Gastrocnemius medialis (tissue), 4 donors: ENCODE measurements at regions of chr12 and their contacts with region 1.

Region 1: GRCh38 chr12:27424631-27425230 is 21.8 kb upstream of the SMCO2 start:
- DNase-seq: no peak
- ATAC-seq: peak; percentile 50 to 79
- H3K4me3 ChIP-seq: no peak overlapping the region
- H3K27ac ChIP-seq: no peak overlapping the region
- H3K4me1 ChIP-seq: no peaks in the 10 kb centered on the region
- H3K27me3 ChIP-seq: no peaks in the 10 kb centered on the region
- CTCF ChIP-seq: peak in 4 of 5 experiments; percentile 23 to 58 (median 38)
- POLR2A ChIP-seq: no peak

Region 2: DNA sequence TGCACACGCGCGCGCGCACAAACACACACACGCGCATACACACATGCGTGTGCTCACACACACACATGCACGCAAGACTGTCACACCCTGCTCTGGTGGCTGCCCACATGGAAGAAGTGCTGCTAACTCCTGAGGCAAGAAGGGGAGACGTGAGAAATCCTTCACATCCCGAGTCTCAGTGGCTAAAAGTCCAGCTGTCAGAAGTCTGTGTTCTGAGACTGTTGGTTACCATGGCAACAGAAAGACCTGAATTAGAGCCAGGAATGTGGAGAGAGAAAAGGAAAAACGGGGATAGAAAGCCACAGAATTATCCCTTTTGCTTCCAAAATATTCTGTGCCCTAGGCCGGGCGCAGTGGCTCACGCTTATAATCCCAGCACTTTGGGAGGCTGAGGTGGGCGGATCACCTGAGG is 170.5 kb after region 1 on chr12:
- in situ Hi-C with region 1: no loop called
- intact Hi-C with region 1: no loop called
- DNase-seq: peak; percentile 17 to 25
- ATAC-seq: peak; percentile 78 to 79
- H3K4me3 ChIP-seq: no peak overlapping the region
- H3K27ac ChIP-seq: peak overlapping the region in 2 of 4 donors; percentile 2 to 46
- H3K4me1 ChIP-seq: peaks cover 13 to 17% of the 10 kb centered on the region in 2 donors
- H3K27me3 ChIP-seq: no peaks in the 10 kb centered on the region
- CTCF ChIP-seq: no peak
- POLR2A ChIP-seq: no peak

Region 3: DNA sequence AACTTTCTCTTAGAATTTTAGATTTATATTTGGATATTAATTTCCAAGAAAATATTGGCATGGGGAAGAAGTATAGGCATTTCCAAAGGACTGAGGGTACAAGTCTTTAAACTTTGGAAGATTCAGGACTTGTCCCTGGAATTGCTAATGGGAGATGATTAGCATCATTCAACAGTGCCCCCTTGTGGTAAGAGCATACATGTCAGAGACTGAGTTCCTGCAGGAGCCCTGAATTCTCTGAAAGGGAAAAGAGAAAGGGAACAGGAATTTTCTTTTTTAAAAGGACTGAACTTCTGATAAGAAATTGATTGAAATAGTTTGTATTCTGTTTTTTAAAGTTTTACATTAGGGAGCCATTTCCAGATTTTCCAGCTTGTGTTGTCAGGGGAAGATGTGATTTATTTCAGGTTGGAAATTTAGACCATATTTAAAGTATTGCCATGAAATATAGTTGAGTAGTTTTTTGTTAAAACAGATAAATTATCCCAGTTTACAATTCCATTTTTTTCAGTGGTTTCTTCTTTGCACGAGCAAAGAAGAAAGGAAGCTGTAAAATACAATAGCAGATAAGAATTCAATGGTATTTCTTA is 227.5 kb after region 1 on chr12:
- in situ Hi-C with region 1: loop called in 1 of 4 experiments (anchors 5 kb)
- intact Hi-C with region 1: no loop called
- DNase-seq: peak in 1 of 2 donors; percentile 41
- ATAC-seq: peak; percentile 75 to 92
- H3K4me3 ChIP-seq: no peak overlapping the region
- H3K27ac ChIP-seq: no peak overlapping the region
- H3K4me1 ChIP-seq: no peaks in the 10 kb centered on the region
- H3K27me3 ChIP-seq: no peaks in the 10 kb centered on the region
- CTCF ChIP-seq: peak; percentile 69 to 89 (median 70)
- POLR2A ChIP-seq: no peak